ENCODE measurements at regions of chr3 and their contacts with region 1.

Region 1: DNA sequence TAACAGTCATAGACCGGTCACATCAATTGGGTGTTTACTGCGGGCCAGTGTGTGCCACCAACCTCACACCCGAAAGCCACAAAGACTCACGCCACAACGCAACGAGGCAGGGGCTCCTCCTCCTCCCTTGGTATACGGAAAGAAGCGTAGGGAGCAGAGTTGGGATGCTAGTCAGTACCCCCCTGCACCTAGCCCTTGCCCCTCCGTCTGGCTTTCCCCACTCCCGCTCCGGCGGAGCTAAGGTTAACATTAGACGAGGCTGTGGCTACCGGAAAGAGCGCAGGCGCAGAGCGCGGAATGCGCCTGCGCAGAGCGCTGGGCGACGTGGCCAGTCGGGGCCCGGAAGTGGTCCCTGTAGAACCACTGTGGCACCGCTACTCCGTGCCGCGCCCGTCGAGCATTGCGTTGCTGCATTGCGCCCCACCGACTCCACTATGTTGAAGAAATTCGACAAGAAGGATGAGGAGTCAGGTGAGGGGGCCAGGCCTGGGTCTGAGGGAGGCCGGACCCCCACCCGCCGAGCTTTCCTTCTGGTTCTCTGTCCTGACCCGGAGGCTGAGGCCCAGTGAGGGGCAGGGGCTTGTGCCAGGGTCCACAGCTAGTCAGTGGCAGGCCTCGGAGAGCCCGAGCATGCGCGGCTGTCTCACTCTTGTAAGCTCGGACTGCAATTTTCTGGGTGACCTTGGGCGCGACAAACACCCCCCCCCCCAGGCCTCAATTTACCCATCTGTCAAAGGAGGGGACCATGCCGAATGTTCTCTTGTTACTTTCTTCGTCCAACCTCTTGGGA is at the start of gene COPG1:
- DNase-seq: peak; percentile 86 to 90
- H3K4me3 ChIP-seq: peak within 1 kb of the TSS; percentile 85
- H3K4me3 Mint-ChIP-seq: peak within 1 kb of the TSS; percentile 94
- H3K27ac Mint-ChIP-seq: peak within 1 kb of the TSS; percentile 96
- H3K4me1 ChIP-seq: no peaks in the 10 kb centered on the region
- H3K4me1 Mint-ChIP-seq: peaks cover 7% of the 10 kb centered on the region
- H3K27me3 ChIP-seq: no peaks in the 10 kb centered on the region
- H3K27me3 Mint-ChIP-seq: no peaks in the 10 kb centered on the region
- CTCF ChIP-seq: no peak
- total RNA-seq, gene COPG1: 178 TPM in 2 replicates

Region 2: GRCh38 chr3:129026728-129027543 is 222.5 kb before region 1 on chr3:
- CTCF ChIA-PET with region 1: interaction called, 6 read pairs
- POLR2A ChIA-PET with region 1: no interaction called
- intact Hi-C with region 1: loop called (anchors 1 kb)
- DNase-seq: peak; percentile 93 to 95
- H3K4me3 ChIP-seq: peak overlapping the region; percentile 44
- H3K4me3 Mint-ChIP-seq: peak overlapping the region; percentile 77
- H3K27ac Mint-ChIP-seq: peak overlapping the region; percentile 73
- H3K4me1 ChIP-seq: peaks cover 6% of the 10 kb centered on the region; the same call in 1 of the 2 replicates
- H3K4me1 Mint-ChIP-seq: peaks cover 7% of the 10 kb centered on the region
- H3K27me3 ChIP-seq: no peaks in the 10 kb centered on the region
- H3K27me3 Mint-ChIP-seq: peaks cover 3% of the 10 kb centered on the region
- CTCF ChIP-seq: peak; percentile 48 to 67

Region 3: GRCh38 chr3:129052675-129053074 is 196.8 kb before region 1 on chr3:
- CTCF ChIA-PET with region 1: interaction called, 22 read pairs
- POLR2A ChIA-PET with region 1: no interaction called
- intact Hi-C with region 1: loop called (anchors 2 kb)
- DNase-seq: no peak
- H3K4me3 ChIP-seq: no peak overlapping the region
- H3K4me3 Mint-ChIP-seq: peak overlapping the region; percentile 40
- H3K27ac Mint-ChIP-seq: peak overlapping the region; percentile 16
- H3K4me1 ChIP-seq: peaks cover 35% of the 10 kb centered on the region
- H3K4me1 Mint-ChIP-seq: peaks cover 16% of the 10 kb centered on the region
- H3K27me3 ChIP-seq: no peaks in the 10 kb centered on the region
- H3K27me3 Mint-ChIP-seq: no peaks in the 10 kb centered on the region
- CTCF ChIP-seq: no peak

Region 4: GRCh38 chr3:129095285-129095684 is 154.2 kb before region 1 on chr3:
- CTCF ChIA-PET with region 1: no interaction called
- POLR2A ChIA-PET with region 1: no interaction called
- intact Hi-C with region 1: no loop called
- DNase-seq: no peak
- H3K4me3 ChIP-seq: no peak overlapping the region
- H3K4me3 Mint-ChIP-seq: no peak overlapping the region
- H3K27ac Mint-ChIP-seq: no peak overlapping the region
- H3K4me1 ChIP-seq: no peaks in the 10 kb centered on the region
- H3K4me1 Mint-ChIP-seq: no peaks in the 10 kb centered on the region
- H3K27me3 ChIP-seq: no peaks in the 10 kb centered on the region
- H3K27me3 Mint-ChIP-seq: no peaks in the 10 kb centered on the region
- CTCF ChIP-seq: no peak

Region 5: GRCh38 chr3:129160891-129161859 is 88.3 kb before region 1 on chr3 and contains the start of gene ISY1:
- CTCF ChIA-PET with region 1: interaction called, 21 read pairs
- POLR2A ChIA-PET with region 1: interaction called, 3 read pairs
- intact Hi-C with region 1: loop called (anchors 1 kb)
- DNase-seq: peak; percentile 90 to 91
- H3K4me3 ChIP-seq: peak within 1 kb of the TSS; percentile 59
- H3K4me3 Mint-ChIP-seq: peak within 1 kb of the TSS; percentile 89
- H3K27ac Mint-ChIP-seq: peak within 1 kb of the TSS; percentile 99
- H3K4me1 ChIP-seq: peaks cover 15% of the 10 kb centered on the region
- H3K4me1 Mint-ChIP-seq: peaks cover 12% of the 10 kb centered on the region
- H3K27me3 ChIP-seq: no peaks in the 10 kb centered on the region
- H3K27me3 Mint-ChIP-seq: no peaks in the 10 kb centered on the region
- CTCF ChIP-seq: peak; percentile 59 to 87
- total RNA-seq, gene ISY1: 35.6 and 37.6 TPM in 2 replicates

Region 6: GRCh38 chr3:129183569-129184395 is 65.7 kb before region 1 on chr3 and contains the start of gene CNBP:
- CTCF ChIA-PET with region 1: interaction called, 3 read pairs
- POLR2A ChIA-PET with region 1: interaction called, 9 read pairs
- intact Hi-C with region 1: loop called (anchors 1 kb)
- DNase-seq: peak; percentile 88 to 94
- H3K4me3 ChIP-seq: peak within 1 kb of the TSS; percentile 81
- H3K4me3 Mint-ChIP-seq: peak within 1 kb of the TSS; percentile 84
- H3K27ac Mint-ChIP-seq: peak within 1 kb of the TSS; percentile 94
- H3K4me1 ChIP-seq: peaks cover 14% of the 10 kb centered on the region
- H3K4me1 Mint-ChIP-seq: no peaks in the 10 kb centered on the region
- H3K27me3 ChIP-seq: no peaks in the 10 kb centered on the region
- H3K27me3 Mint-ChIP-seq: no peaks in the 10 kb centered on the region
- CTCF ChIP-seq: no peak
- total RNA-seq, gene CNBP: 229 and 266 TPM in 2 replicates

Region 7: GRCh38 chr3:129278439-129278970 is 29.0 kb after region 1 on chr3 and contains the start of gene HMCES:
- CTCF ChIA-PET with region 1: interaction called, 5 read pairs
- POLR2A ChIA-PET with region 1: interaction called, 3 read pairs
- intact Hi-C with region 1: loop called (anchors 1 kb)
- DNase-seq: peak; percentile 85 to 93
- H3K4me3 ChIP-seq: peak within 1 kb of the TSS; percentile 81
- H3K4me3 Mint-ChIP-seq: peak within 1 kb of the TSS; percentile 98
- H3K27ac Mint-ChIP-seq: peak within 1 kb of the TSS; percentile 98
- H3K4me1 ChIP-seq: peaks cover 7% of the 10 kb centered on the region
- H3K4me1 Mint-ChIP-seq: peaks cover 15% of the 10 kb centered on the region
- H3K27me3 ChIP-seq: no peaks in the 10 kb centered on the region
- H3K27me3 Mint-ChIP-seq: no peaks in the 10 kb centered on the region
- CTCF ChIP-seq: no peak
- total RNA-seq, gene HMCES: 47.7 and 47.9 TPM in 2 replicates